Caco-2 (cell line): ENCODE measurements at regions of chr2 and their contacts with region 1.

Region 1: GRCh38 chr2:227724394-227725045 is at the start of gene SCYGR6:
- DNase-seq: no peak
- H3K4me3 ChIP-seq: no peak within 1 kb of the TSS
- H3K4me3 Mint-ChIP-seq: peak within 1 kb of the TSS; percentile 42
- H3K27ac Mint-ChIP-seq: peak within 1 kb of the TSS; percentile 80
- H3K4me1 ChIP-seq: peaks cover 35% of the 10 kb centered on the region
- H3K4me1 Mint-ChIP-seq: peaks cover 13% of the 10 kb centered on the region
- H3K27me3 ChIP-seq: no peaks in the 10 kb centered on the region
- H3K27me3 Mint-ChIP-seq: no peaks in the 10 kb centered on the region
- CTCF ChIP-seq: no peak
- total RNA-seq, gene SCYGR6: not detected in 2 replicates

Region 2: GRCh38 chr2:227802882-227803281 is 78.4 kb after region 1 on chr2:
- CTCF ChIA-PET with region 1: no interaction called
- POLR2A ChIA-PET with region 1: no interaction called
- intact Hi-C with region 1: loop called (anchors 2 kb)
- DNase-seq: no peak
- H3K4me3 ChIP-seq: no peak overlapping the region
- H3K4me3 Mint-ChIP-seq: no peak overlapping the region
- H3K27ac Mint-ChIP-seq: no peak overlapping the region
- H3K4me1 ChIP-seq: peaks cover 13% of the 10 kb centered on the region
- H3K4me1 Mint-ChIP-seq: no peaks in the 10 kb centered on the region
- H3K27me3 ChIP-seq: no peaks in the 10 kb centered on the region
- H3K27me3 Mint-ChIP-seq: no peaks in the 10 kb centered on the region
- CTCF ChIP-seq: no peak